Dendritic cell treated with granulocyte-macrophage colony-stimulating factor and Interleukin-4, amounts not matched to agents 40 ng/mL and 50 ng/mL, for 4 days (primary cell): ENCODE measurements at regions of chr9 and their contacts with region 1.

Region 1: DNA sequence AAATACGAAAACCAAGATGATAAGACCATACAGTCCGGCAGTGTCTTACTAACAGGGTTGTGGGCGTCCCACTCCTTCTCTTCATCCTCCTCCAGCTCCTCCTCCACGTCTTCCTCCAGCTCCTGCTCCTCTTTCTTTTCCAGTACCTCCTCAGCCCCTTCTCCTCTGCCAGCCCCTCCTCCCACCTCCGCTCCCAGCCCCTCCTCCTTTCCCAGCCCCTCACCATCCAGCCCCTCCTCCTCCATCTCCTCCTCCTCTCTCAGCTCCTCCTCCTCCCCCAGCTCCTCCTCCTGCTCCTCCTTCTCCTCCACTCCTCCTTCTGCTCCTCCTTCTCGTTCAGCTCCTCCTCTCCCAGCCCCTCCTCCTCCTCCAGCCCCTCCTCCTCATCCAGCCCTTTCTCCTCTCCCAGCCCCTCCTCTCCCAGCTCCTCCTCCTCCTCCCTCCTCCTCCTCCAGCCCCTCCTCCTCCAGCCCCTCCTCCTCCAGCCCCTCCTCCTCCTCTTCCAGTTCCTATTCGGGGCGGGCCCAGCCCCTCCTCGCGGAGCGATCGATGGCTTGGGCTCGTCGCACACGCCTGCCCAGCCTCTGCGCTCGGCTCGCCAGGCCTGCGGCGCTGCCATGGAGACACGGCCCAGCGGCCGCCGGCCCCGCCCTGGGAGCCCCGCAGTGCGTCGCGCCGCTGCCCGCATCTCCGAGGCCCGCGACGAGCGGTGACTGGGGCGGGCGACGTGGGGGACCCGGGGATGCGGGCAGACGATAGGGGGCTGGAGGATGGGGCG is at the start of gene BRD3OS:
- H3K4me3 Mint-ChIP-seq: peak within 1 kb of the TSS; percentile 78
- H3K27ac Mint-ChIP-seq: peak within 1 kb of the TSS; percentile 69
- H3K4me1 Mint-ChIP-seq: peaks cover 17% of the 10 kb centered on the region
- H3K27me3 Mint-ChIP-seq: no peaks in the 10 kb centered on the region

Region 2: DNA sequence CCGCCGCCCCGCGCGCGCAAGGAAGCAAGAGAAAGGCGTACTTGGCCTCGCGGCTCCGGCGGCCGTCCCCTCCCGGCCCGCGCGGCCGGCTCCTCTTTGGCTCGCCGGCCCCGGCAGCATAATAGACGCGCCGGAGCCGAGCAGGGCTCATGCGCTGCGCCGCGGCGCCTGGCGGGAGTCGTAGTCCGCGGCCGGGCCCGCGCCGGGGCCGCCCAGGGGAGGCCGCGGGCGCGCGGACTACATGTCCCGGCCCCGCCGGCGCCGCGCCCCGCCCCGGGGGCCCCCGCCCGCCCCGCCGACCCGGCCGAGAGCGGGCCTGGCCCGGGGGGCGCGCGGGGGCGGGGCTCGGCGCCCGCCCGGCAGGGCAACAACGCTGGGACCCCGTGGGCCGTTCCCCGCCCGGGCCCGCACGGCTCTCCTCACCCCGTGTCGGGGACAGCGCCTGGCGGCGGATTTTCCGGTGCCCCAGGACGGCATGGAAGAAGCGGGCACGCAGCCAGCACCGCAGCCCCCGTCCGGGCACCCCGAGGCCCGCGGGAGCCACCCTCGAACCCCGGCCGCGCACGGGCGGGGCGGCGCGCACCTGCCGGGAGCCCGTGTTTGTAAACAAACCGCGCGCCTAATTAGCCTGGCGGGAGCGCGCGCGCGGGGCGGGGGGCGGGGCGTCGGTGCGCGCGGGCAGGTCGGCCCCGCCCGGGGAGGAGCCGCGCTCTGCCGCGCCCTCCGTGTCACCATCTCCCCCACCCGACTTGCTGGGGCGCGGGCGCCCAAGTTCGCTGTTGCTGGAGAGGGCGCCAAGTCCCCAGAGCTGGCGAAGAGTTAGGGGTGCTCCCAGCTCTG is 43.1 kb after region 1 on chr9 and contains the start of gene BRD3:
- intact Hi-C with region 1: loop called (anchors 2 kb)
- H3K4me3 Mint-ChIP-seq: peak within 1 kb of the TSS; percentile 81
- H3K27ac Mint-ChIP-seq: peak within 1 kb of the TSS; percentile 83
- H3K4me1 Mint-ChIP-seq: peaks cover 35% of the 10 kb centered on the region
- H3K27me3 Mint-ChIP-seq: peaks cover 21% of the 10 kb centered on the region

Region 3: DNA sequence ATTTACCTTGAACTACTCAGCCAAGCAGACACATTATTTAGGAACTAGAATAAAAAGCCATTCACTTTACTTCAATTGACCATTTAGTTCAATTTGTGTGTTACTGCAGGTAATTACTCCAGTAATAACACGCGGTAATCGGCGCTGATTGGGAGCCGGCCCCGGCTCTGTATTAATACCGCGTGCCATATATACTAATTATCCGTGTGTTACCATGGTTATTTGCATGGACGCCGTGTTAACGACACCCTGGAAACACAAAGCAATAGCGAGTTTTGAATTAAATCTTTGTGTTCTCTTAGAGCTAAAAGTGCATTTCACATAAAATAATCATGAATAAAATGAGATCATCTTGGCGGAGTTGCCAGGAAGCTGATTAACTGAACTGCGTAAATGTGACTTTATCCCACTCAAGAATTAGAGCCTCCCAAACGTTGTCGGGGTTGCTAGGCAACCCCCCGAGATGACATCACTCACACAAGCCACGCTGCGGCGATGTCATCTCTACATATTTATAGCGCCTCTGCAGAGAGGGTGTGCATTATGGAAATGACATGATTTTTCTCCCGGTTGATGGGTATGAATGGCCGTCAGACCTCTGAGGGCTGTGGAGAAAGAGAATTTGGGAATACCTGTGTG is 180.8 kb after region 1 on chr9:
- intact Hi-C with region 1: no loop called
- H3K4me3 Mint-ChIP-seq: no peak overlapping the region
- H3K27ac Mint-ChIP-seq: no peak overlapping the region
- H3K4me1 Mint-ChIP-seq: peaks cover 7% of the 10 kb centered on the region
- H3K27me3 Mint-ChIP-seq: peaks cover 24% of the 10 kb centered on the region